Sigmoid colon (tissue), 7 donors: ENCODE measurements at regions of chr19 and their contacts with region 1.

Region 1: DNA sequence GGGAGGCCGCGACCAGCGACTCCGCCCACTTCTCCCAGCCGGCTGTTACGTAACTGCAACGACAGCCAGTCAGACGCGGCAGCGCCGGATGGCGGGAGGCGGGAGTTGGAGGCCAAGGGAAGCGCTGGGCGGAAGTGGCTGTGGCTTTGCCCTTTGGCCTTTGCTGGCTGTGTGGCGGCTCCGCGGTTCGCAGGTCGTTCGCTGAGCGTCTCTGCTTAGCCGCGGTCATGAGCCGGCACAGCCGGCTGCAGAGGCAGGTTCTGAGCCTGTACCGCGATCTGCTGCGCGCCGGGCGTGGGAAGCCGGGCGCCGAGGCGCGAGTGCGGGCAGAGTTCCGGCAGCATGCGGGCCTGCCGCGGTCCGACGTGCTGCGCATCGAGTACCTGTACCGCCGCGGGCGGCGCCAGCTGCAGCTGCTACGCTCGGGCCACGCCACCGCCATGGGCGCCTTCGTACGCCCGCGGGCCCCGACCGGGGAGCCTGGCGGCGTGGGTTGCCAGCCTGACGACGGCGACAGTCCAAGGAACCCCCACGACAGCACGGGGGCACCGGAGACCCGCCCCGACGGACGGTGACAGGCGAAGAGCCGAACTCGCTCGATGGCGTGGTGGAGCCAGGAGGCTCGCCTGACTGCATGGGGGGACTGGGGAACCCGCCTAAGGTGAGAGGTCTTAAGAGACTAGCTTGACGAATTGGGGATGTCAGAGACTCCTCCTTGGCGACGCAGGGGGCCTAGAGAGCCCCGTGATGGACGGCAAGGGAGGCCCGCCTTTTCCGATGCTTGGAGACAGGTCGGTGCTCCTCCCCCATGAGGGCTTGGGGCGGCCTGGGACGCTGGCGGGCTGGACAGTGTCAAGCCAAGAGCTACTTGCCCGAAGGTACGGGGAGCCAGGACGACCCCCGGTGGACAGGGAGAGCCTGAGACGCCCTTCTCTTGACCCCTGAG is at the start of gene SDHAF1:
- DNase-seq: peak; percentile 99
- H3K4me3 ChIP-seq: peak within 1 kb of the TSS; percentile 71 to 98 (median 89)
- H3K27ac ChIP-seq: peak within 1 kb of the TSS; percentile 88 to 94 (median 91)
- H3K4me1 ChIP-seq: peaks cover 0 to 49% (median 42%) of the 10 kb centered on the region in 4 donors
- H3K27me3 ChIP-seq: no peaks in the 10 kb centered on the region
- CTCF ChIP-seq: no peak
- EP300 ChIP-seq: no peak
- POLR2A ChIP-seq: peak; percentile 83 to 87
- total RNA-seq, gene SDHAF1: 56.2 to 135 (median 68.9) TPM

Region 2: GRCh38 chr19:35748106-35749020 is 247.0 kb before region 1 on chr19 and contains the start of gene LIN37:
- intact Hi-C with region 1: loop called (anchors 5 kb)
- DNase-seq: peak; percentile 100
- H3K4me3 ChIP-seq: peak within 1 kb of the TSS; percentile 71 to 95 (median 84)
- H3K27ac ChIP-seq: peak within 1 kb of the TSS; percentile 85 to 99 (median 87)
- H3K4me1 ChIP-seq: peaks cover 0 to 48% (median 42%) of the 10 kb centered on the region in 4 donors
- H3K27me3 ChIP-seq: no peaks in the 10 kb centered on the region
- CTCF ChIP-seq: peak in 2 of 4 experiments; percentile 8 to 9
- EP300 ChIP-seq: peak in 1 of 4 donors; percentile 66
- POLR2A ChIP-seq: peak; percentile 88 to 91
- total RNA-seq, gene LIN37: 12.5 to 19.1 (median 15.9) TPM

Region 3: DNA sequence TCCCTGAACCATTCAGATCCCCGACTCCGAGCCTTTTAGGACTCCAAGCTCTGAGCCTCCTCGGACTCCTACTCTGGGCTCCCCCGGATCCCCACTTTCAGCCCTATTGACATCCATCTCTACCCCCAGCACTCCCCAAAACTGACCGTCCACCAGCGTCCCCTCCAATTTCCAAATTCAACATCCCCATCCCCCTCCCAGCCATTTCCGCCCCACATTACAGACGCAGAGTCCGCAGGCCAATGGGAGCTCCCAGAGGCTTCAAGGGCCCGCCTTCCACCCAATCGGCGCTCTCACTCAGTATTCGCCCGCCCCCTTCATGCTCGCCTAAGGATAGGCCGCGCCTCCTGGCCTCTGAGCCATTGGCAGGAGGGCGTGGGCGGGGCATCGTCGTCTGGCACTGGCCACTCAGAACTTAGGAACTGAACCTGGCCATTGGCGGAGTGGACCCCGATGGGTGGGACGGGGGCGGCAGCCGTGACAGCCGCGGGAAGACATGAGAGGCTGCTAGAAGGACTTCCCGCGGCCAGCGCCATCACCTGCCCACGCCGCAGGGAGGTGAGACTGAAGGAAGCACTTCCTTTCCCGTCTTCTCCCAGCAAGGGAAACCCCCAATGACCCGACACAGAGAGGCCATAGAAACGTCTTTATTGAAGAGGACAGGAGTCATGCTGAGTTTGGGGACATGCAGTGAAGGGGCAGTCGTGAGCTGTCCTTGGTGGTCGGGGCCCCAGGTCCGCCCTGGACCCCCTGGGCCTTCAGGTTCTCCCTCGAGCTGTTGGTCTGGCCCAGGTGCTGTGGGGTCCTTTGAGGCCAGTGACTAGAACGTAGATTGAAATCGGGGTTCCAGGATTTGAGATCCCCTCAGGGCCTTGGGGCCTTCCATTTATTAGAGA is 19.0 kb after region 1 on chr19 and contains the start of gene ALKBH6:
- intact Hi-C with region 1: loop called (anchors 2 kb)
- DNase-seq: peak; percentile 100
- H3K4me3 ChIP-seq: peak within 1 kb of the TSS; percentile 55 to 75 (median 61)
- H3K27ac ChIP-seq: peak within 1 kb of the TSS; percentile 86 to 89 (median 86)
- H3K4me1 ChIP-seq: peaks cover 0 to 23% (median 22%) of the 10 kb centered on the region in 4 donors
- H3K27me3 ChIP-seq: no peaks in the 10 kb centered on the region
- CTCF ChIP-seq: no peak
- EP300 ChIP-seq: no peak
- POLR2A ChIP-seq: peak; percentile 1 to 44
- total RNA-seq, gene ALKBH6: 19.9 to 31.7 (median 26.6) TPM

Region 4: DNA sequence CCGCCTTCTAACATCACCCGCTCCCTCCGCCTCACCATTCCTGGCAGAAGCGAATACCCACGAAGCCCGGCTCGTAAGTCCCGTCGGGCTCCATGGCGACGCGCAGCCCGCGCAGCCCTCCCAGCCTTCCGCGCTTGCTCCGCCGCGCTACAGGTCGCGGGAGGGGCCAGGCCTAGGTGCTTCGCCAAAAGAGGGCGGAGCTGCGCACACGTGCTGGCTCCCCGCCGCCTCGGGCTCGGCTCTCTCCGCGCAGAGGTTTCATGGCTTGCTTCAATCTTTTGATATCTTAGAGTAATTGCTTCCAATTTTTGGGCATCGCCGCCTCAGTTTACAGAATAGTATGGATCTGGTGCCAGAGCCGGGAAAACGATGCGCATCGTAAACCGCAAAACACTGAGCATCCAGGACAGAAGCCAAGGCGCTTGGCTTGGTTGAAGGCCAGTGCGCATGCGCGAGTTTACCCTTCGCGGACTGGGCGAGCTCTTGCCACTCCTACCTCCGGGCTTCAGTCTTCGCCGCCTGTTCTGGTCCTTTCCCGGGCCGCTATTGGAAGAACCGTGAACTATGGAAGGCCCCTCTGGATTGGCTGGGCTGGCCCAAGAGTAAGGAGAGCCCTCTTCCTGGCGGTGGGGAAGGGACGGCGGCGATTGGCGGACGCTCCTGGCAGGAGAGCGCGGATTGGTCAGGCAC is 119.6 kb after region 1 on chr19 and contains the start of gene POLR2I:
- intact Hi-C with region 1: loop called (anchors 2 kb)
- DNase-seq: peak; percentile 100
- H3K4me3 ChIP-seq: peak within 1 kb of the TSS; percentile 74 to 92 (median 84)
- H3K27ac ChIP-seq: peak within 1 kb of the TSS; percentile 91 to 95 (median 92)
- H3K4me1 ChIP-seq: peaks cover 0 to 36% (median 28%) of the 10 kb centered on the region in 4 donors
- H3K27me3 ChIP-seq: no peaks in the 10 kb centered on the region
- CTCF ChIP-seq: no peak
- EP300 ChIP-seq: peak in 1 of 4 donors; percentile 25
- POLR2A ChIP-seq: peak; percentile 67 to 69
- total RNA-seq, gene POLR2I: 39.9 to 118 (median 83.5) TPM